Common myeloid progenitor, CD34-positive (primary cell): ENCODE measurements at regions of chr6 and their contacts with region 1.

Region 1: DNA sequence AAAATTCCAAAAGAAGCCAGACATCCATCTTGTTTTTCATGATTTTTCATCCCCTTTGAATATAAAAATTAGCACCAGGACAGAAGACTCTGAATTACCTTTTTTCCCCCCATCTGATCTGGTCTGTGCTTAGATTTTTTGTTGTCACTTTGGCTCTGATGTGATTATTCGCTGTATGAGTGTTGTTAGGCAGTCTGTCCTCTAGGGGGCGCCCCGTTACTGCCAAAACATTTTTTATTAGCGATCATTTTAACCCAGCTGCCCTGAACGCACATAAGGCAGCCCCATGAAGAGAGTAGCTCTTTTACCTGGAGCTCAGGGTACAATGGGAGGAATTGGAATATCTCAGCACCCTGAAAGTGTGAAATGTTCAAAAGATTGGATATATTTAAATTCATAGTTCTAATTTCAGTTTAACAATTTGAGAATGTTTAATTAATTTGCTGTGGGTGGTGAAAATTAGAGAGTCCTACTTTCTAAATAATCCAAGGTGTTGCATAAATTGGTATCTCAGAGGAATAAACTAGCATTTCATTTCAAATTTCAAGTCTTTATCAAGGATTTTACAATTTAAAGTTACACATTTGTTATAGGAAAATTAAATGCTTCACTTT is 60.8 kb downstream of the PRPH2 start:
- DNase-seq: peak; percentile 74 to 86 (median 81)
- H3K4me3 ChIP-seq: no peak overlapping the region
- H3K27ac ChIP-seq: peak overlapping the region in 1 of 2 experiments; percentile 29
- H3K4me1 ChIP-seq: no peaks in the 10 kb centered on the region
- H3K27me3 ChIP-seq: no peaks in the 10 kb centered on the region

Region 2: DNA sequence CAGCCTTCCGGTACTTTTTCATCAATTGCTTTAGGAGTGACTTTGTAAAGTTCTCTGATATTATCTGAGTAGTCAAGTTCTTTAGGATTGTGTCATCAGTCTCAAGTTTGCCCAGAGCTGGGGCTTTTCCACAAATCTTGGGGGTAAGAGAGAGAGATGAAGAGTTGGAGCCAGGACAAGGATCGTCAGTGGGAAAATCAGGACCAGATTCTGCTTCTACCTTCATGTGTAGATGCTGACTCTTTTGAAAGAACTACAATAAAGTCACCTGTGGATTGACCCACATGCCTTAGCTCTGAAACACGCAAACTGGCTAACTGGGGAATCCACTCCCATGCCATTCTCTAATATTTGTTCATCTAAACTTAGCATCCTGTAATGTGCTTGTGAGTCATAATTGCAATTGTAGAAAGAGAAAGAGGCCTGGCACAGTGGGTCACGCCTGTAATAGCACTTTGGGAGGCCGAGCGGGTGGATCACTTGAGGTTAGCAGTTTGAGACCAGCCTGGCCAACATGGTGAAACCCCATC is 104.6 kb after region 1 on chr6:
- CTCF ChIA-PET with region 1: no interaction called
- POLR2A ChIA-PET with region 1: no interaction called
- DNase-seq: no peak
- H3K4me3 ChIP-seq: no peak overlapping the region
- H3K27ac ChIP-seq: no peak overlapping the region
- H3K4me1 ChIP-seq: peaks cover 0 to 12% (median 6%) of the 10 kb centered on the region in 4 experiments
- H3K27me3 ChIP-seq: no peaks in the 10 kb centered on the region

Region 3: DNA sequence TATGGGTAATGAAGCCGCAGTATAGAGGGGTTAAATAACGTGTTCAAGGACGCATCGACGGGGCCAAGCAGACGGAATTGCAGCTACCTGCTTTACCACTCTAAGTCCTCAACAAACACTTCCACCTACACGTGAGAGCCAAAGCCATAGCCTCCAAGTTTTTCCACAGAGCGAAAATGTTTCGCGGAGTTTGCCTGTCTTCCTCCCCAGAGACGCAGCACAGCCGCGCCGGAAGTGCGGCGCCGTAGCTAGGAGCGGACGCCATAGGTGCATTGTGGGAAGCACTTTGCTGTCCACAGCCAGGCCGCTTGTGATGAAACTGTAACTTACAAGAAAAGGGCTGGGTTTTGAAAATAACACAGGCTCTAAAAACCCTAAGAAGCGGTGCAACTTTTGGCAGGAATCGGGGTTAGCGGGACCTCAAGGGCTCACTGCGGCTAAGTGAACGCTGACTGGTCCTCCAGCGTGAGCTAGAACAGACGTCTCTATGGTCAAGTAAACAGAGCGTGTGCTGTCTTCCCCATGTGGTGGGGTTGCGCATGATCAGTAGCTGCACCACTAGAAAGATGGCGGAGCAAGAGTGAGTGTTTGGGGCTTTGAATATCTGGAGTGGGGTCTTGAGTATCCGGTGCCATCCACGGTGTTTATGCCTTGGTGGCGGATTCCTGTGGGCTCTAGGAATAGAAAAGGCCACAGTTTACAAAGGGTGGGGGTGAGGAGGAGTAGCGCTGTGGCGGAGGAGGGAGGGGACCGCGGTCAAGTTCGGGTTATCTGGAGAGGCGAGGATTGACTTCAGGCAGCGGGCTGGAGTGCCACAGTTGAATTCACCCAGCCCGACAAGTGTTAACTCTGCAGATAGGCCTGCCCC is 218.0 kb after region 1 on chr6 and contains the start of gene RPL7L1:
- CTCF ChIA-PET with region 1: interaction called, 58 read pairs
- POLR2A ChIA-PET with region 1: interaction called, 6 read pairs
- DNase-seq: peak; percentile 90 to 94 (median 91)
- H3K4me3 ChIP-seq: peak within 1 kb of the TSS; percentile 63 to 99 (median 92)
- H3K27ac ChIP-seq: peak within 1 kb of the TSS; percentile 93 to 97
- H3K4me1 ChIP-seq: peaks cover 0 to 19% (median 12%) of the 10 kb centered on the region in 4 experiments
- H3K27me3 ChIP-seq: no peaks in the 10 kb centered on the region

Region 4: GRCh38 chr6:42901536-42901957 is 239.9 kb after region 1 on chr6:
- CTCF ChIA-PET with region 1: interaction called, 39 read pairs
- POLR2A ChIA-PET with region 1: no interaction called
- DNase-seq: peak; percentile 80 to 86 (median 82)
- H3K4me3 ChIP-seq: peak overlapping the region in 2 of 7 experiments; percentile 2 to 15
- H3K27ac ChIP-seq: no peak overlapping the region
- H3K4me1 ChIP-seq: peaks cover 0 to 18% (median 11%) of the 10 kb centered on the region in 4 experiments
- H3K27me3 ChIP-seq: no peaks in the 10 kb centered on the region

Region 5: GRCh38 chr6:42928986-42929820 is 267.6 kb after region 1 on chr6 and contains the start of gene CNPY3:
- CTCF ChIA-PET with region 1: no interaction called
- POLR2A ChIA-PET with region 1: no interaction called
- DNase-seq: peak; percentile 98 to 99 (median 99)
- H3K4me3 ChIP-seq: peak within 1 kb of the TSS; percentile 77 to 94 (median 85)
- H3K27ac ChIP-seq: peak within 1 kb of the TSS; percentile 93 to 98
- H3K4me1 ChIP-seq: peaks cover 18 to 54% (median 42%) of the 10 kb centered on the region in 4 experiments
- H3K27me3 ChIP-seq: no peaks in the 10 kb centered on the region